GM13977 (cell line): ENCODE measurements at regions of chr13 and their contacts with region 1.

Region 1: GRCh38 chr13:75479102-75479740 is 2.7 kb downstream of the TBC1D4 start:
- DNase-seq: no peak
- CTCF ChIP-seq: no peak

Region 2: DNA sequence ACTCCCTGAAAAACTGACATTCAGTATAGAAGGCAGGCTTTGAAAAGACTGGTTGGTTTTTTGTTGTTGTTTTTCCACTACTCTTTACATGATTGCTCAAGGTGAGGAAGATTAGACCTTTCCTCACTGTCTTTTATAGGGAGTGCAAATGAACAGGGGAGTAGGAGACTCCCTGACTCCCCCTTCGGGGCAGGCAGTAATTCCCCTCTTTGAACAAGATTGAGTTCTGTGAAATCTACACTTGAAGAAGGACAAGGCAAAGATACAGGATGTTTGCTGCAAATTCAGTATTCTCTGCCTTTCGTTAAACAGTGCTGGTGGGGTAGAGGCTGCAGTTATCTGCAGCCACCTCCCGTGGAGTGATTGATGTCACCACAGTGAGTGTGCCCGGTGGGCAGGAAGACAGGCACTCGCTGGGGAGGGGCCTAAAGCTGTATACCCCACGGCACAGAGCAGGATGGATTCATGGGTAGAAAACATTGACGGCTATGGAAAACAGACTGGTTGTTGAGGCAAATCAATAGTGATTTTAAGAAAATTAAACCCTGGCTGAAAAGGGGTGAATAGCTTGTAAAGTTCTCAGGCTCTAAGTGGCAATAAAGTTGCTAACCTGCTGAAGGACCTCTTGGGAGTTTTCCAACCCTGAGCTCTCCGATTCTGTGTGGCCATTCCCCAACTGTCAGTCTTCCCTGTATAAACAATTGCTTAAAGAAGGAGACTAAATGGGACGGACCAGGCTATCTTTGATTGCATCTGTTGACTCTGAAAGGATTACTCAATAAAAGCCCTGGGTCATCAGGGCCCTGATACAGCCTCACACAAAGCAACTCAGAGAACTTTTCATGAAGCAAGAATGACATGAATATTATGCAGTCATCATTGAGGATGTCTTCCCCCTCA is 305.5 kb before region 1 on chr13:
- in situ Hi-C with region 1: no loop called
- DNase-seq: no peak
- CTCF ChIP-seq: no peak

Region 3: GRCh38 chr13:75372517-75372916 is 106.7 kb before region 1 on chr13:
- in situ Hi-C with region 1: loop called (anchors 5 kb)
- DNase-seq: no peak
- CTCF ChIP-seq: peak; percentile 59

Region 4: GRCh38 chr13:75687150-75687763 is 208.0 kb after region 1 on chr13:
- in situ Hi-C with region 1: no loop called
- DNase-seq: no peak
- CTCF ChIP-seq: peak; percentile 52